ENCODE measurements at regions of chr16 and their contacts with region 1.

Region 1: DNA sequence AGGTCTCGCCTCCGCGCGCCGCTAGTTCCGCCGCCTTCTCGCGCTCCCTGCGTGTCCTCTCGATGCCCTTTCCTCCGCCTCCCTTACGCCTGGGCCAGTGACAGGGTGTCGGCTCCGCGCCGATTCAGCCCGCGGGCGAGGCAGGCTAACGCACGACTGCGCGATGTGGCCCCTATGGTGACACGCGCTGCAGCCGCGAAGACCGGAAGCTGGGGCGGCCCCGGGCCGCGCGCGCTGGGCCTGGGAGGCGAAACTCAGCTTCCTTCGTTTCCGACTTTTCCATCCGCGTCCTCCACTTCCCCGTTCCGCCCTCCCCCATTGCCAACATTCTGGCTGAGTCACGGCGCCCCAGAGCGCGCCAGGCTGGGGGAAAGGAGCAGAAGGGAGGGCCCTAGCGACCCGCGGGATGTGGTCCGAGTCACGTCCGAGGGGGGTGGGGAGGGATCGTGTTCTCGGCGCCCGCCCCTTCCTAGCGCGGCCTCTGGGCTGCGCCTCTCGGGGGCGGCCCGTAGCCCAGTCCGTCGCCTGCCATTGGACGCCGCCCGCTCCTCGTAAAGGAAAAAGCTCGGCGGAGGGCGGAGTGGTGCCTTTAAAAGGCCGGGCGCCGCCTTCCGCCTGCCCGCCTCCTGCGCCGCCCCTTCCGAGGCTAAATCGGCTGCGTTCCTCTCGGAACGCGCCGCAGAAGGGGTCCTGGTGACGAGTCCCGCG is at the start of gene ALDOA:
- DNase-seq: peak; percentile 86
- ATAC-seq: peak; percentile 88
- H3K4me3 ChIP-seq: peak within 1 kb of the TSS; percentile 90 to 92
- H3K27ac ChIP-seq: peak within 1 kb of the TSS; percentile 96
- H3K4me1 ChIP-seq: peaks cover 41% of the 10 kb centered on the region
- H3K27me3 ChIP-seq: no peaks in the 10 kb centered on the region
- CTCF ChIP-seq: no peak
- total RNA-seq, gene ALDOA: 2,516 TPM

Region 2: DNA sequence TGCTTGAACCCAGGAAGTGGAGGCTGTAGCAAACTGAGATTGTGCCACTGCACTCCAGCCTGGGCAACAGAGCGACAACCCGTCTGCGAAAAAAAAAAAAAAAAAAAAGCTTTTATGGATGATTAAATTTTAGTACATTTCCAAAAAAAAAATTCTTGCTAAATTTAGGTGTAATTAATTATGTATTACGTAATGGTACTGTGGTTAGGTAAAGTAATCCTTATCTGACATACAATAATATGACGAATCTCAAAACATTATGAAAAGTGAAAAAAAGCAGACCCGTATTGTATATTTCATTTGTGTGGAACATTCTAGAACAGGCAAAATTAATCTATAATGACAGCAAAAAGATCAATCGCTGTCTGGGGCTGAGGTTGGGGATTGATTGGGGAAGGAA is 107.8 kb after region 1 on chr16:
- CTCF ChIA-PET with region 1: no interaction called
- POLR2A ChIA-PET with region 1: interaction called, 10 read pairs
- in situ Hi-C with region 1: no loop called
- intact Hi-C with region 1: no loop called
- DNase-seq: no peak
- ATAC-seq: no peak
- H3K4me3 ChIP-seq: no peak overlapping the region
- H3K27ac ChIP-seq: no peak overlapping the region
- H3K4me1 ChIP-seq: no peaks in the 10 kb centered on the region
- H3K27me3 ChIP-seq: no peaks in the 10 kb centered on the region
- CTCF ChIP-seq: no peak

Region 3: GRCh38 chr16:30761928-30762810 is 696.9 kb after region 1 on chr16 and contains the starts of genes CFAP119 and RNF40:
- CTCF ChIA-PET with region 1: no interaction called
- POLR2A ChIA-PET with region 1: interaction called, 11 read pairs
- in situ Hi-C with region 1: no loop called
- intact Hi-C with region 1: no loop called
- DNase-seq: peak; percentile 95
- ATAC-seq: peak; percentile 96
- H3K4me3 ChIP-seq: peak within 1 kb of the TSS; percentile 98
- H3K27ac ChIP-seq: peak within 1 kb of the TSS; percentile 92
- H3K4me1 ChIP-seq: peaks cover 25% of the 10 kb centered on the region
- H3K27me3 ChIP-seq: no peaks in the 10 kb centered on the region
- CTCF ChIP-seq: no peak
- total RNA-seq, gene CFAP119: 21.0 TPM
- total RNA-seq, gene RNF40: 114 TPM

Measured in Panc1 (cell line).